ENCODE measurements at regions of chr3 and their contacts with region 1.

Region 1: DNA sequence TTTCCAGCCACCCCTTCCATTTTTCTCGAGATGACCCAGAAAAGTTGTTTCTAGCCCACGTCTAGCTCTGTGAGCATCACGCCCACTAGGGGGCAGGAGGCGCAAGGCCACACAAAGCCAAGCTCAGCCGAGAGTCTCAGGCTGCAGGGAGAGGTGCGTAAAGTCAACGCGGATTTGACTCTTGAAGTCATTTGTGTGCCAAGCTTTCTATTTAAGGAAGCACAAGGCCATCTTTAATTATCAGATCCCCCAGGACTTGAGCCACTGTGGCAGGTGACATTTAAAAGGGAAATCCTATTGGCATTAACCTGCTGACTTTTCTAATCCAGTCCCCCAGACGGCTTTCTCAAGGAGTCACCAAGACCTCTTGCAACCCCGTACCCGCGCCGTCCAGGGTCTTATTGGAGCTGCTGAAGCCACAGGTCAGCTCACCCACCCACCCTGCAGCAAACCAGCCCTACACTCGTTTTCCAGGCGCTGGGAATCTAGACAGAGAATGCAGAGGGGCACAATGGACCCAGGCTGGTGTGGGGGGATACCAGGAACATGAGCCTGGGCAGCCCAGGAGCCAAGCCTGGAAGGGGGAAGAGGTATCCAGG is 62.1 kb downstream of the CAPN7 start:
- DNase-seq: peak; percentile 77 to 95 (median 90)

Region 2: DNA sequence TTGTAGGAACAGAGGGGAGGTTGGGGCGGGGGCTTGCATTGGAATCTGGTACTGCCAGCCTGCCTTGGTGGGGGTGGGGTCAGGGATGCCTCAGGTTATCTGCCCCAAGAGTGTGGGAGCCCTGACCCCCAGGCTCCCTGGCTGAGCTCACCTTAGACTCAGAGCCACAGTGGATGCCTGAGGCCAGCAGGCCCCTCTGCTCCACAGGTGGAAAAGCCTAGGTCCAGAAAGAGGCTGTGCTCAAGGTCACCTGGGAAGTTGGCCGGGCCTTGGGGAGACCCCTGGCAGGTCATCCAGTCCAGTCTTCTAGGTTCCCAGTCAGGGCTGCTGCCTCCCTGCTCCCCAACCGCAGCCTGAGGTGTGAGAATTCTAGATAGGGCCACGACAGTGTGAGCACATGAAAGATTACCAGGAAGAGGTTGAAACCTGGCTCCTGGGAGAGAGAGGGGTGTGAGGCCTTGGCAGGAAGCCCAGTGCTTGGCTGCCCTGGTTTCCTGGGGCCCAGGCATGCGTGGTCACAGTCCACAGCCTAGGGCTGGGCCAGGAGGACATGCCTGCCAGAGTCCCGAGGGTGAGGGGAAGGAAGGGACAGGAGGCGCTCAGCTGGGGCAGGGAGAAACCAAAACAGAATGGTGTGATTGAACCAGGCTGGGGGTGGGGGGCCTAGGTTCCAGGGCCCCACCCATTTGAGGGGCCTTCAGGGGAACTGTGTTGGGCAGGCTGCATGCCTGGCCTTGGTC is 1783.1 kb before region 1 on chr3:
- intact Hi-C with region 1: no loop called
- DNase-seq: peak in 30 of 42 donors; percentile 40 to 81 (median 56)

Region 3: DNA sequence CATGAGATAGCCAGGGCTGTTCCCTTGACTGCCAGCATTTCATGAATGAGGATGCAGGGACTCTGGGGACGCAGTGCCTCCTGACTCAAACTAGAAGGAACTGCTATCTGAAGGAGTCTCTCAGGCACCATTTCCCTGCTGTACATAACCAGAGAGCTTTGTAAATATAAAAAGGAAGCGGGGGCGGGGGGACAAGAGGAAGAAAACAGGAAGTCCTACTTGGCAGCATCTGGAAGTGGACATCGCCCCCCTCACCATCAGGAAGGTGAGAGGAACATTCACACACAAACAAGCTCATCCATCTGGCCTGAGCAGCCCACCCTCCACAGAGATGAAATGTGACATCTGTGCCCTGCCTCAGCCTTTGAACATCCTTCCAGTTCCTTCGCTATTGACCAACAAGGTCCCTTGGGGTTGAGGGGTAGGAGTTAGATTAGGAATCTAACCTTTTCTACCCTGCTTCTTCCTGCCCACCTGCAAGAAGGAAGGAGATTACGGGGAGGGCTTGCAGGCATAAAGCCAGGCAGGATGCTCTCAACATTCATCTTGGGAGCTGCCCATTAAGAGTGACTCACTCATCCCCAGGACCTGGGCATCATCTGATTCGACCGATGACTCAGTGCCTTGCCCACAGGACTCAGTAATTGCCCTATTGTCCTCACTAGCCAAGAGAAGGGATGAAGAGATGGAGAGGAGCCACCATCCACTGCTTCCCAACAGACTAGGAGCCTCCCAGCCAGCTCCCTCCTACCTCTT is 32.4 kb after region 1 on chr3:
- intact Hi-C with region 1: no loop called
- DNase-seq: peak in 3 of 42 donors; percentile 19 to 62 (median 54)

Region 4: DNA sequence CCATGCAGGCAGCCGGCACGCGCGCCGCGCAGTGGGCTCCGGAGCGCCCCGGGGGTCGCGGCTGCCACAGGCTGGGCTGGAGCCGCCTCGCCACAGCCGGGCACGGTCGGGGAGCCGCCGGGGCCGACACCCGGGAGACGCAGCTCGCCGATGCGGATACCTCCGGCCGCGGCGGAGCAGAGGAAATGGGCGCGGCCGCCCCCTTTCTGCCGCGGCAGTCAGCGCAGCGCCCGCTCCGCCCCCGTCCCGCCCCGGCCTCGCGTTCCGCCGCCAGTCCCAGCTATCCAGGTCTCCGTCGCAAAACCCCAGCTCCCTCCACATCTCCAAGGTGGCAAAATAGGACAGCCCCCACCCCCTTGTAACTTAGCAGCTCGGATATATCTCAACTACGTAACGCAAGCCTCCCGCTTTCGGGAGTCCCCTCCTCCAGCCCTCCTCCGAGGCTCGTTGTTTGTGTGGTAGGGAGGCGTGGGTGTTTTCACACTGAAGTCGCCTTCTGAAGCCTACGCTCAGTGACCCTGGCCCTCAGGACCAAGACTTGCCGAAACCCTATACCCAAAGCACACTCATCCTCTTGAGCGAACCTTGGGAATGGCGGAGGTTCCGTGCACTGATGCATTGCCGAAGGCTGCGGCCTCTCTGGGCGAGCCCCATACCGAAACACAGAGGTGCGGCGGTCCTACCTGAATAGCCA is 64.4 kb after region 1 on chr3 and contains the start of gene SH3BP5:
- intact Hi-C with region 1: loop called (anchors 1 kb)
- DNase-seq: peak in 41 of 42 donors; percentile 35 to 90 (median 80)

Region 5: GRCh38 chr3:15377961-15378791 is 110.0 kb after region 1 on chr3:
- intact Hi-C with region 1: loop called (anchors 2 kb)
- DNase-seq: peak; percentile 89 to 99 (median 97)

Measured in head of caudate nucleus (tissue), 42 donors.